ENCODE measurements at regions of chr15 and their contacts with region 1.

Region 1: DNA sequence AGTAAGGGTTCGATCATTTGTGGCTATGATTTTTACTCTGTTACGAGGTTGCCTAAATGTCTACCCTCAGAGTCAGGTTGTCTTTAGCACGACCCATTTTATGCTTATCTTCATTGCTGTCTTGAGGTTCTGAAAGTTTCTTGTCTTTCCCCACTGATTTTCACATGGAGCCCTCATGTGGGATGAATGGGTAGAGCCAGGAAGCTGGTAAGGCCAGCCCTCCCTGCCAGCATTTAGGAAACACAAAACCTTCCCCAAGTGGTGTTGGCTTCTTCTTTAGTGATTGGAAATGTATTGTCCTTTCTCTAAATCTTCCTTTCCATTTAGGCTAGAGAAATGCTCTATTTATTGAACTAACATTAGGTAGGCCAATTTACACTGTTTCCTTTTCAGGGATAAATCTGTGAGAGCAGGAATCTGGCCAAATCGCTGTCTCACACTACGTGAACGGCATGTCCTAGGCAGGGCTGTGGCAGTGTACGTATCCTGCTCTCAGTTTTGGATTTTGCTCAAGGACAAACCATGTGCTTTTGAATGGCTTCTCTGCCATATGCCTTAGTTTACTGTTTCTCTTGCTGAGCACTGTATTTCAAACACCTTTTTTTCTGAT is 43.7 kb downstream of the MYZAP start:
- DNase-seq: no peak
- H3K4me3 ChIP-seq: no peak overlapping the region
- H3K27ac ChIP-seq: no peak overlapping the region
- H3K4me1 ChIP-seq: no peaks in the 10 kb centered on the region
- H3K27me3 ChIP-seq: peaks cover 0 to 3% (median 0%) of the 10 kb centered on the region in 4 experiments; a peak in 1 of 7 replicates
- CTCF ChIP-seq: peak; percentile 2 to 41 (median 36); a peak in 3 of 4 replicates
- EP300 ChIP-seq: no peak
- POLR2A ChIP-seq: no peak
- RAD21 ChIP-seq: peak; percentile 40 to 53

Region 2: DNA sequence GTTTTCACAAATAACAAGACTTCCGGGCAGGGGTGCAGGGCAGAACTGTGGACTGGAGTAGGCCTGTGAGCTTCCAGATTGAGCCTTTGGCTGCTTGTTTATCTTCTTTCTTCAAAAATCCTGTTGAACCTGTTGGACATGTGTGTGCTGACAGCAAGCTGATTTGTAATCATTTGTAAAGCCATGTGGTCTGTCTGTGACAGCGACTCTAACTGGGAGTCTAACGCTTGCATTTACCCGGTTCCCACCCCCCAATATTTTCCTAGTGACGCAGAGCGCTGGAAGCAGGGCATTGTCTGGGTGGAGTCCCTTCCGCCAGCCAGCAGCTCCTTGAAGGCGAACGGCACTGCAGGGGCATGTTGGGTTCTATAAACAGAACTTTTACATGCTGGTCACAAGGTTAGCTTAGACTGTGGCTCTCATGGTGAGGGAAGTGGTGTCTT is 129.4 kb before region 1 on chr15:
- CTCF ChIA-PET with region 1: no interaction called
- POLR2A ChIA-PET with region 1: no interaction called
- DNase-seq: no peak
- H3K4me3 ChIP-seq: no peak overlapping the region
- H3K27ac ChIP-seq: no peak overlapping the region
- H3K4me1 ChIP-seq: peaks cover 0 to 8% (median 5%) of the 10 kb centered on the region in 4 experiments
- H3K27me3 ChIP-seq: no peaks in the 10 kb centered on the region
- CTCF ChIP-seq: no peak
- EP300 ChIP-seq: no peak
- POLR2A ChIP-seq: no peak
- RAD21 ChIP-seq: no peak

Region 3: DNA sequence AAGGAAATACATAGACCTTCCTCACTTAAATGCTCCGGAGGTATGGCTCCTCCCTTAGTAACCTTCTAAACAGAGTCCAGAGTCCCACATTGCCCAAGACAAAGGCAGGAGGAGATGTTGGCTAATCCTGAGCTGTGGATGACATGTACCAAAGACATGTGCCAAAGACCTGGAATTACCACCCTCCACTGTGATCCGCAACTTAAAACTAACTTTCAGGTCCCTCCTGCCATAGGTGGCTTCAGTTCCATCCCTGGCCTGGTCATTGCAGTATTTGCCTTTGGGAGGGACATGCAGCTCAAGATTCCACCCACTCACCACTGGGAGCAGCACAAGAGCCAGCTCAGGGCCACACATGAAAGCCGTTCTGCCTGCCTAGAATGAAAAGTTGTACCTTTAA is 15.7 kb before region 1 on chr15:
- CTCF ChIA-PET with region 1: interaction called, 13 read pairs
- POLR2A ChIA-PET with region 1: no interaction called
- DNase-seq: no peak
- H3K4me3 ChIP-seq: no peak overlapping the region
- H3K27ac ChIP-seq: no peak overlapping the region
- H3K4me1 ChIP-seq: no peaks in the 10 kb centered on the region; a peak in 1 of 7 replicates
- H3K27me3 ChIP-seq: peaks cover 0 to 2% (median 0%) of the 10 kb centered on the region in 4 experiments; a peak in 1 of 7 replicates
- CTCF ChIP-seq: peak; percentile 28 to 39 (median 35); a peak in 3 of 4 replicates
- EP300 ChIP-seq: no peak
- POLR2A ChIP-seq: no peak
- RAD21 ChIP-seq: peak; percentile 17 to 24; a peak in 1 of 4 replicates

Measured in H1 (cell line).